ENCODE measurements at regions of chr5 and their contacts with region 1.

Region 1: DNA sequence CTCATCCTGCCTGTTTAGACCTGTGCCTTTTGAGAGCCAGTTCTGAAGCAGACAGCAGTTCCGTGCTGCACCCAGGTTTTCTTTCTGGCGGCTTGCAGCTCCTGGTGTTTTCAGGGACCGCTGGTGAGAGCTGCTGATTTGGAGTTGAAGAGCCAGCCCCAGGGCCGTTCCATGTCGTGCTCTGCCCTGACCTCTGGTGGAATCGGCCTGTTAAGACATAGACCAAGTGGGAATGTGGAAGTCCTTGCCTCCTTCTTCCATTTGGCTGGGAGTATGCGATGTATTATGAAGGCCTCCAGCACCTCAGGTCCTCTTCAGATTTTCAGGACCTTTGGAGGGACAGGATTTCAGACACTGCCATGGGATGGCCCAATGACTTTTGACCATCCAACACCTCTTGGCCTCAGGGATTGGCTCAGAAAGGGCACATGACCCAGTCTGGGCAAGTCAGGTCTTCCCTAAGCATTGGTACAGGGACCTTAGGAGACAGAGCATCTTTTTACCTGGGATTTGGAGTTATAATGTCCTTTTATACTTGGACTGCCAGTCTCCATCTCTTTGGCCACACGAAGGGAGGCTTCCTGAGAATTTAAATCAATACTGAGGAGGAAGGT is 136.1 kb upstream of the CLINT1 start:
- DNase-seq: peak; percentile 57
- ATAC-seq: peak; percentile 69
- H3K4me3 ChIP-seq: no peak overlapping the region
- H3K4me3 Mint-ChIP-seq: no peak overlapping the region
- H3K27ac ChIP-seq: no peak overlapping the region
- H3K27ac Mint-ChIP-seq: no peak overlapping the region
- H3K4me1 ChIP-seq: peaks cover 0 to 3% of the 10 kb centered on the region in 2 donors
- H3K4me1 Mint-ChIP-seq: peaks cover 2% of the 10 kb centered on the region
- H3K27me3 ChIP-seq: peaks cover 0 to 4% (median 0%) of the 10 kb centered on the region in 4 experiments
- H3K27me3 Mint-ChIP-seq: peaks cover 5% of the 10 kb centered on the region
- CTCF ChIP-seq: peak; percentile 72

Region 2: GRCh38 chr5:157778121-157778805 is 216.8 kb before region 1 on chr5:
- CTCF ChIA-PET with region 1: no interaction called
- POLR2A ChIA-PET with region 1: no interaction called
- intact Hi-C with region 1: no loop called
- DNase-seq: no peak
- ATAC-seq: no peak
- H3K4me3 ChIP-seq: no peak overlapping the region
- H3K4me3 Mint-ChIP-seq: no peak overlapping the region
- H3K27ac ChIP-seq: no peak overlapping the region
- H3K27ac Mint-ChIP-seq: no peak overlapping the region
- H3K4me1 ChIP-seq: no peaks in the 10 kb centered on the region
- H3K4me1 Mint-ChIP-seq: no peaks in the 10 kb centered on the region
- H3K27me3 ChIP-seq: peaks cover 0 to 2% (median 0%) of the 10 kb centered on the region in 4 experiments
- H3K27me3 Mint-ChIP-seq: peaks cover 2% of the 10 kb centered on the region
- CTCF ChIP-seq: no peak

Region 3: GRCh38 chr5:157812086-157812485 is 182.9 kb before region 1 on chr5:
- CTCF ChIA-PET with region 1: interaction called, 63 read pairs
- POLR2A ChIA-PET with region 1: no interaction called
- intact Hi-C with region 1: loop called (anchors 1 kb)
- DNase-seq: no peak
- ATAC-seq: no peak
- H3K4me3 ChIP-seq: no peak overlapping the region
- H3K4me3 Mint-ChIP-seq: no peak overlapping the region
- H3K27ac ChIP-seq: no peak overlapping the region
- H3K27ac Mint-ChIP-seq: no peak overlapping the region
- H3K4me1 ChIP-seq: no peaks in the 10 kb centered on the region
- H3K4me1 Mint-ChIP-seq: no peaks in the 10 kb centered on the region
- H3K27me3 ChIP-seq: no peaks in the 10 kb centered on the region
- H3K27me3 Mint-ChIP-seq: no peaks in the 10 kb centered on the region
- CTCF ChIP-seq: no peak

Region 4: DNA sequence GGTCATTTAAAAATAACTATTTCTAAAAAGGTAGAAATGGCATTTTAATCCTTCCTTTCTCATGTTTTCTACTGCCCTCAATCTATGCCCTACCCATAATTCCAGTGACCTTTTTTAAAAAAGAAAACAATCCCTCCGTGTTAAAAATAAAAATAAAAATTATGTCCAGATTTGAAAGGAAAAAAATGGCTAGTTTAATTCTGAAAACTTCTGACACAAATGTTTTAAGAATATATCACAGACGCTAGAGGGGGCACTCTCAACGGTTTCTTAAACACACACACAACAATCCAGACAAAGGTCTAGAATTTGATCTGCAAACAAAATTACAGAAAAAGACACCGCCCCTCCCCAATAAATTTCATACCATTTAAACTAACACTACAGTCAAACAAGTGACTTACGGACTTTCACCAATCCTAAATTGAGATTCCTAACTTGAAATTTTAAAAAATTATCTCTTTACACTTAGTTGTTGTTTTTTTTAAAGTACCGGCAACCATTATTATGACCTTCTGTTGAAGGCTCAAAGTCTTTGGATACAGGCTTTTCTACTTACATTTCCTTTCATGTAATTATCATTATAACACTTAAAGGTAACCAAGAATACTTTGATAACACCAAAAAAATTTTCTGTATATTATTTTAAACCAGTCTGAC is 174.3 kb before region 1 on chr5:
- CTCF ChIA-PET with region 1: interaction called, 63 read pairs
- POLR2A ChIA-PET with region 1: no interaction called
- intact Hi-C with region 1: loop called (anchors 1 kb)
- DNase-seq: peak; percentile 53
- ATAC-seq: no peak
- H3K4me3 ChIP-seq: no peak overlapping the region
- H3K4me3 Mint-ChIP-seq: no peak overlapping the region
- H3K27ac ChIP-seq: peak overlapping the region in 1 of 2 donors; percentile 39
- H3K27ac Mint-ChIP-seq: peak overlapping the region; percentile 2
- H3K4me1 ChIP-seq: no peaks in the 10 kb centered on the region
- H3K4me1 Mint-ChIP-seq: peaks cover 24% of the 10 kb centered on the region
- H3K27me3 ChIP-seq: no peaks in the 10 kb centered on the region
- H3K27me3 Mint-ChIP-seq: no peaks in the 10 kb centered on the region
- CTCF ChIP-seq: peak; percentile 72

Measured in B cell (primary cell).